ENCODE measurements at regions of chr1 and their contacts with region 1.

Region 1: DNA sequence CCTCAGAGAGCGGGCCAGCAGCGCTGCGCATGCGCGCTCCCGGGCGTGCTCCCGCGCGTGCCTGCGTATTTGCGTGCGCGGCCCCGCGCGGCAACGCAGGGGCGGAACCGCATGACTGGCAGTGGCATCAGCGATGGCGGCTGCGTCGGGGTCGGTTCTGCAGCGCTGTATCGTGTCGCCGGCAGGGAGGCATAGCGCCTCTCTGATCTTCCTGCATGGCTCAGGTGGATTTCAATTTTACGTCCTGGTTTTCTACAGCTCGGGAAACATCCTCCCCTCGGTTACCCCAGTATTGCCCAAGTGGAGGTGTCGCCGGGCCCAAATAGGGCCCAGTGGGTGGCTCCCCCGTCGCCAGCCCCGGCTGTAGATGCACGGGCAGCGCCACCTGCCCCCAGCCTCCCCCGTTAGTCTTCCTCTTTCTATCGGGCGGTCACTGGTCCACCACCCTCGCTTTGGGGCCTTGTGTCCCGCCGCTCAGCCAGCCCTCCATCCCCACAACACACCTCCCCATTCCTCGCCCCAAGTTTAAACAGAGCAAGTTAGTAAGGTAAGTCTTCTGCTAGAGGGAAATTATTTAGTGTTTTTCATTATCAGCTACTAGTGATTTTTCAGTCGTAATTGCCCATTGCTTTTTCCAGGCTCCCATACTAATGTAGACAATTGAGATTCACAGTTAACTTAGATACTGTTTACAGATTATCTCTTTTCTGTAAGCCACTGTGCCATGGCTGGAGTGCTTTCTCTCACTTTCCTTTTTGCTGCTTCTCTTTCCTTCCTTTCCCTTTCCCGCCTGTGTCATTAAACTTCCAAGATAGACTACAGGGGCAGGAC is at the start of gene LYPLAL1:
- DNase-seq: peak; percentile 82 to 89 (median 88)
- H3K4me3 ChIP-seq: peak within 1 kb of the TSS; percentile 42 to 84
- H3K4me3 Mint-ChIP-seq: peak within 1 kb of the TSS; percentile 93 to 100 (median 99)
- H3K27ac ChIP-seq: peak within 1 kb of the TSS; percentile 79
- H3K27ac Mint-ChIP-seq: peak within 1 kb of the TSS; percentile 88 to 99 (median 98)
- H3K4me1 ChIP-seq: peaks cover 35% of the 10 kb centered on the region
- H3K4me1 Mint-ChIP-seq: peaks cover 35 to 47% (median 42%) of the 10 kb centered on the region in 4 donors
- H3K27me3 ChIP-seq: no peaks in the 10 kb centered on the region
- H3K27me3 Mint-ChIP-seq: no peaks in the 10 kb centered on the region
- total RNA-seq, gene LYPLAL1: 22.1 to 25.2 TPM

Region 2: DNA sequence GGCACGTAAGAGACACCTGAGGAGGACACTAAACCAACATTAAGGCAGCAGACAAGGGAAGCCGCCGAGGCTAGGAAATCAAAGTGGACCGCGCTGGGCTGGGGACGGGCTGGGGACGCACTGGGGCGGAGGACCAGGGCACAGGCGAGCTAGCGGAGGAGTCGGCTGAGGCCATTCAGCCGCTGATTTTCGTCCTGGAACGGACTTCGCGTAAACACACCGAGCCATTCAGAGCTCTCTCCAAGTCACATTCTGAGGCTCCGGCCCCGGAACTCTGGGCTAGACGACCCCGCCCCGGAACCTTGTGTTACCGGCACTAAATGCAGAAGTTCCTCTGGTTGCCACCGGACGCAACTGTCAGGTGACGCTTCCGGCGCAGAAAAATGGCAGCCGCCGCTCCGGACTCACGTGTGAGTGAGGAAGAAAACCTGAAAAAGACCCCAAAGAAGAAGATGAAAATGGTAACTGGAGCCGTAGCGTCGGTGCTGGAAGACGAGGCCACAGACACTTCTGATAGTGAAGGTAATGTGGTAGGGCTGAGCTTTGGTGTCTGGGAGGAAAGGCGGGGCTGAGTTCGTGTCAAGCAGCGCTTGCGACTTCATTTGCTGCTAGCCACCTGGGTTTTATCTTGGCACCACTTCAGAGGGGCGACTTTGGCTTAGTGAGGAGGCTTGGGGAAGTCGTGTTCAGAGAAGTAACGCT is 888.9 kb before region 1 on chr1 and contains the start of gene RRP15:
- CTCF ChIA-PET with region 1: no interaction called
- POLR2A ChIA-PET with region 1: interaction called, 5 read pairs
- intact Hi-C with region 1: loop called (anchors 1 kb)
- DNase-seq: peak; percentile 81 to 86 (median 82)
- H3K4me3 ChIP-seq: peak within 1 kb of the TSS; percentile 81 to 93
- H3K4me3 Mint-ChIP-seq: peak within 1 kb of the TSS; percentile 93 to 100 (median 98)
- H3K27ac ChIP-seq: peak within 1 kb of the TSS; percentile 60
- H3K27ac Mint-ChIP-seq: peak within 1 kb of the TSS; percentile 91 to 99 (median 96)
- H3K4me1 ChIP-seq: peaks cover 24% of the 10 kb centered on the region
- H3K4me1 Mint-ChIP-seq: peaks cover 17 to 41% (median 27%) of the 10 kb centered on the region in 4 donors
- H3K27me3 ChIP-seq: no peaks in the 10 kb centered on the region
- H3K27me3 Mint-ChIP-seq: peaks cover 5 to 7% of the 10 kb centered on the region in 2 donors
- total RNA-seq, gene RRP15: 14.1 to 16.8 TPM

Region 3: GRCh38 chr1:218345673-218346390 is 828.1 kb before region 1 on chr1:
- CTCF ChIA-PET with region 1: no interaction called
- POLR2A ChIA-PET with region 1: no interaction called
- intact Hi-C with region 1: loop called (anchors 5 kb)
- DNase-seq: peak; percentile 31 to 50 (median 39)
- H3K4me3 ChIP-seq: peak overlapping the region; percentile 2 to 47
- H3K4me3 Mint-ChIP-seq: no peak overlapping the region
- H3K27ac ChIP-seq: no peak overlapping the region
- H3K27ac Mint-ChIP-seq: peak overlapping the region in 2 of 7 donors; percentile 19 to 89
- H3K4me1 ChIP-seq: peaks cover 36% of the 10 kb centered on the region
- H3K4me1 Mint-ChIP-seq: peaks cover 20 to 31% (median 26%) of the 10 kb centered on the region in 4 donors
- H3K27me3 ChIP-seq: no peaks in the 10 kb centered on the region
- H3K27me3 Mint-ChIP-seq: peaks cover 3 to 9% of the 10 kb centered on the region in 2 donors

Region 4: GRCh38 chr1:219088778-219089557 is 85.0 kb before region 1 on chr1:
- CTCF ChIA-PET with region 1: no interaction called
- POLR2A ChIA-PET with region 1: no interaction called
- intact Hi-C with region 1: no loop called
- DNase-seq: no peak
- H3K4me3 ChIP-seq: no peak overlapping the region
- H3K4me3 Mint-ChIP-seq: no peak overlapping the region
- H3K27ac ChIP-seq: no peak overlapping the region
- H3K27ac Mint-ChIP-seq: no peak overlapping the region
- H3K4me1 ChIP-seq: no peaks in the 10 kb centered on the region
- H3K4me1 Mint-ChIP-seq: no peaks in the 10 kb centered on the region
- H3K27me3 ChIP-seq: no peaks in the 10 kb centered on the region
- H3K27me3 Mint-ChIP-seq: peaks cover 0 to 3% of the 10 kb centered on the region in 2 donors

Region 5: GRCh38 chr1:219188331-219188803 is 14.4 kb after region 1 on chr1:
- CTCF ChIA-PET with region 1: interaction called, 5 read pairs
- POLR2A ChIA-PET with region 1: interaction called, 7 read pairs
- intact Hi-C with region 1: loop called (anchors 1 kb)
- DNase-seq: no peak
- H3K4me3 ChIP-seq: no peak overlapping the region
- H3K4me3 Mint-ChIP-seq: peak overlapping the region in 1 of 8 donors; percentile 37
- H3K27ac ChIP-seq: no peak overlapping the region
- H3K27ac Mint-ChIP-seq: peak overlapping the region in 1 of 7 donors; percentile 77
- H3K4me1 ChIP-seq: peaks cover 19% of the 10 kb centered on the region
- H3K4me1 Mint-ChIP-seq: peaks cover 17 to 32% (median 25%) of the 10 kb centered on the region in 4 donors
- H3K27me3 ChIP-seq: no peaks in the 10 kb centered on the region
- H3K27me3 Mint-ChIP-seq: no peaks in the 10 kb centered on the region

Region 6: DNA sequence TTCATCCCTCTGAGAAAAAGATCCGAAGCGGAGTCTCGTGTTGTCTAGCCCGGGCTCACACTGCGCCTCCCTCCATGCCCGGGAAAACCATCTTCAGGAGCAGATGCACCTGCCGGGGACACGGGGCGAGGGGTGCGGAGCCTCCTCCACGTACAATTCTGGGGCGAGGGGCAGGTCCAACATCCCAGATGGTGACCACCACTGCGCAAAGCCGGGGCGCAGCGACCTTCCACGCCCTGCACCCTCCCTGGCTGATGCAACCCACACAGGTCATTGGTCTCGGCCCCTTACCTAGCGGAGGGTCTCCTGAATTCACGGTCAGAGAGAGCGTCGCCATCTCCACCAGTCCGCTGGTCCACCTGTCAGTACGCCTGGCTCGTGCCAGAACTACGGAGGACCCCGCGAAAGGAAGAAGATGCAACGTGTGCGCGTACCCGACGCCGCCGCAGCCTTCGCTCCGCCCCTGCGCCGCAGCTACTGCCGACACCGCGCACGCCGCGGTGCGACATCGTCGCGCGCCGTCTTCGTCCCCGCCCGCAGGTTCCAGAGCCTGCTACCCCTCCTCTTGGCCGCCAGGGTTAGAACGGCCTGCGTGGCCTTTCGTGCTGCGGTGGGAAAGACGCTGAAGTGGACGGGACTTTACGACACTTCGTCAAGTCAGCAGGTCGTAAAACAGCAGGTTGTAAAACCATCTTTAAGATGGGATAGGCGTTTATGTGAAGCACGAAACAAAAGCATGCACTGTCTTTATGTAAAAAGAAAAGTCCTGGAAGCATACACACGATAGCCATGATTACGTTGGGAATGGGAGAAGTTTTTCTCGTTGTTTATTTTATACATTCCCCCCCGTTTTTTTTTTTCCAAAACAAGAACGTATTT is 872.3 kb after region 1 on chr1 and contains the start of gene EPRS1:
- CTCF ChIA-PET with region 1: no interaction called
- POLR2A ChIA-PET with region 1: no interaction called
- intact Hi-C with region 1: loop called (anchors 5 kb)
- DNase-seq: peak; percentile 95 to 97 (median 96)
- H3K4me3 ChIP-seq: peak within 1 kb of the TSS; percentile 78 to 90
- H3K4me3 Mint-ChIP-seq: peak within 1 kb of the TSS; percentile 91 to 99 (median 94)
- H3K27ac ChIP-seq: peak within 1 kb of the TSS; percentile 91
- H3K27ac Mint-ChIP-seq: peak within 1 kb of the TSS; percentile 93 to 98 (median 96)
- H3K4me1 ChIP-seq: peaks cover 31% of the 10 kb centered on the region
- H3K4me1 Mint-ChIP-seq: peaks cover 25 to 53% (median 33%) of the 10 kb centered on the region in 4 donors
- H3K27me3 ChIP-seq: no peaks in the 10 kb centered on the region
- H3K27me3 Mint-ChIP-seq: no peaks in the 10 kb centered on the region
- total RNA-seq, gene EPRS1: 98.7 to 116 TPM